Vagina (tissue), 2 donors: ENCODE measurements at regions of chr19 and their contacts with region 1.

Region 1: DNA sequence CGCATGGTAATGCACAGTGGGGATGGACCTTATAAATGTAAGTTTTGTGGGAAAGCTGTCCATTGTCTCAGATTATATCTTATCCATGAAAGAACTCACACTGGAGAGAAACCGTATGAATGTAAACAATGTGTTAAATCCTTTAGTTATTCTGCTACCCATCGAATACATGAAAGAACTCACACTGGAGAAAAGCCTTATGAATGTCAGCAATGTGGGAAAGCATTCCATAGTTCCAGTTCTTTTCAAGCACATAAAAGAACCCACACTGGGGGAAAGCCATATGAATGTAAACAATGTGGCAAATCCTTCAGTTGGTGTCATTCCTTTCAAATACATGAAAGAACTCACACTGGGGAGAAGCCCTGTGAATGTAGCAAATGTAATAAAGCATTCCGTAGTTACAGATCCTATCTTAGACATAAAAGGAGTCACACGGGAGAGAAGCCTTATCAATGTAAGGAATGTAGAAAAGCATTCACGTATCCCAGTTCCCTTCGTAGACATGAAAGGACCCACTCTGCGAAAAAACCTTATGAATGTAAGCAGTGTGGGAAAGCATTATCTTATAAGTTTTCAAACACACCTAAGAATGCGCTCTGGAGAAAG is 13.8 kb downstream of the ZNF763 start:
- DNase-seq: no peak
- H3K4me3 ChIP-seq: no peak overlapping the region
- H3K27ac ChIP-seq: no peak overlapping the region
- H3K4me1 ChIP-seq: no peaks in the 10 kb centered on the region
- H3K27me3 ChIP-seq: no peaks in the 10 kb centered on the region
- CTCF ChIP-seq: no peak
- POLR2A ChIP-seq: no peak

Region 2: DNA sequence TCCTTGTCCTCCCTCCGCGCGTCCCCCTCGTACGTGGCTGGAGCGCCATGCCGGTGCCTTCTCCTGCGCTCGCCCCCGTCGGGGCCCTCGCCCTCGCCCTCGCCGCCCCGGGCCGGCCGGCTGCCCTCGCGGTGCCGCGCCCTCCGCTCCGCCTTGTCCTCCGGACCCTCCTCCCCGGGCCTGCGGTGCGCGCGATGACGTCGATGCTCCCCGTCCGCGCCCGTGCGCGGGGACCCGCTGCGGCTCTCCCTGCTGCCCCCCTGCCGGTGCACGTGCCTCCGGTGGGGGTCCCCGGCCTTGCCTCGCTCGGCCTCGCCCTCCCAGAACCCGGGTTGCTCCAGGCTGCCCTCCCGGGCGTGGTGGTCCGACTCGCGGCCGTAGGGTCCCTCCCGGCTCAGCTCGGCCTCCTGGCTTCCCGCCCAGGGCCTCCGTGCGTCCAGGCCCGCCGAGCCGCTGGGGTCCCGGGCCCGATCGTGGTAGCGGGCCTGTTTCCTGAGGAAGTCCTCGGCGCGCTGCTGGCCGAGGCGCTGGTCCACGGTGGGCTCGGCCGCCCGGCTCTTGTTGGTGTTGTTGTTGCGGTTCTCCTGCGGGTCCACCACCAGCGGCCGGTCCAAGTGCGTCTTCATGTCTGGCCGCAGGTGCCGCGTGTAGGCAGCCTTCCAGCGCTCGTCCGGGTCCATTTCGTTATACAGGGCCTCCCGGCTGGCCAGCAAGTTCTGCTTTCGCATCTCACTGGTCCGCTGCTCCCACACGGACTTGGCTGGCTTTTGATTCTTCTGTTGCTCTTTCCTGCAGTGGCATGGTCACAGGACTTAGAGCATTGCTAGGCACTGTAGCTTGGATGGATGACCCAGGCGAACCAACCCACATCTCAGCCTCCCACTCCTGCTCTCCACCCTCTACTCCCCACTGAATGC is 1320.2 kb after region 1 on chr19:
- intact Hi-C with region 1: loop called (anchors 5 kb)
- DNase-seq: no peak
- H3K4me3 ChIP-seq: peak overlapping the region; percentile 25 to 29
- H3K27ac ChIP-seq: no peak overlapping the region
- H3K4me1 ChIP-seq: no peaks in the 10 kb centered on the region
- H3K27me3 ChIP-seq: peaks cover 7% of the 10 kb centered on the region
- CTCF ChIP-seq: no peak
- POLR2A ChIP-seq: no peak